ENCODE measurements at regions of chr11 and their contacts with region 1.

Region 1: GRCh38 chr11:69642913-69643632 is 2.1 kb downstream of the CCND1 start:
- DNase-seq: peak; percentile 65 to 81 (median 70)
- H3K4me3 ChIP-seq: peak overlapping the region; percentile 43
- H3K4me3 Mint-ChIP-seq: peak overlapping the region; percentile 74 to 88 (median 80)
- H3K27ac ChIP-seq: no peak overlapping the region
- H3K27ac Mint-ChIP-seq: no peak overlapping the region
- H3K4me1 ChIP-seq: peaks cover 30% of the 10 kb centered on the region
- H3K4me1 Mint-ChIP-seq: peaks cover 20 to 32% (median 24%) of the 10 kb centered on the region in 3 donors
- H3K27me3 ChIP-seq: peaks cover 22% of the 10 kb centered on the region
- H3K27me3 Mint-ChIP-seq: peaks cover 24 to 26% of the 10 kb centered on the region in 2 donors

Region 2: GRCh38 chr11:69101115-69101791 is 541.8 kb before region 1 on chr11:
- CTCF ChIA-PET with region 1: interaction called, 28 read pairs
- POLR2A ChIA-PET with region 1: no interaction called
- DNase-seq: peak; percentile 53 to 76 (median 59)
- H3K4me3 ChIP-seq: no peak overlapping the region
- H3K4me3 Mint-ChIP-seq: no peak overlapping the region
- H3K27ac ChIP-seq: no peak overlapping the region
- H3K27ac Mint-ChIP-seq: no peak overlapping the region
- H3K4me1 ChIP-seq: no peaks in the 10 kb centered on the region
- H3K4me1 Mint-ChIP-seq: no peaks in the 10 kb centered on the region
- H3K27me3 ChIP-seq: no peaks in the 10 kb centered on the region
- H3K27me3 Mint-ChIP-seq: peaks cover 3 to 17% of the 10 kb centered on the region in 2 donors

Region 3: DNA sequence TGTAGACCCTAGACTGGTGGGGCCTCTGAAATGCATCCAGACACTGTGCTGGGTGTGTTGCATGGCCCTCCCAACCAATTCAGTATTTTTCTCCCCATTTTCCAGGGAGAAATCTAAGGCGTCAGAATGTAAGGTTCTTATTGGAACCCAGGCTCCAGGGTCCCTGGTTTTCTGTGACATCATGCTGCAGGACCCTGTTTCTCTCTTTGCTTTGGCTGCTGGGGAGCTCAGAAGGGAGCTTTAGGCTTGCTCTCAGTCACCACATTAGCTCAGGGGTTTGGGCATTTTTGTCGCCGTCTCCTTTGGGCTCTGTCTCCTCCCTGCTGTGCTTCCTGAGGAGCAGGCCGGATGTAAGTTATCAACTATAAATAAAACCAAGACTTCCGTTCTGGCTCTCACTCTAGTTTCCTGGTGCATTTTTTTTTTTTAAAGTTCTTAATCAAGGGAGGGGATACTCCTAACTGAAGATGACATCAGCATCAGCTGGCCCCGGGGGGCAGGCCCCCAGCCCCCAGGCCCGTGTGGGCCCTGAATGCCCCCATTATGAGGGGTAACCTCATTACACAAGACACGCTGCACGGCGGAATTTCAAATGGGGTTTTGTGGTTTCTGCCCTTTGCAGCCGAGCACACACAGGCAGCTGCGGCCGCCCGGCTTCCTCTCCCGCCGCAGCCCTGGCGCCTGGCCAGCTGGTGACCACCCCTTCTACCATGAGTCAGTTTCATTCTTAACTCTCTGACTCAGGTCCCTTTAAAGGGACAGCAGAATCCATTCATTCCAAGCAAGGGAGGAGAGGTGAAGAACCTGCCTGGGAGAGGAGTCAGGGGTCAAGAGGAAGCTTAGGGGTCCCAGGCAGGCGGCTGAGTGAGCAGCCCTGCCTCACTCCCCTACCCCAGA is 345.9 kb before region 1 on chr11:
- CTCF ChIA-PET with region 1: interaction called, 13 read pairs
- POLR2A ChIA-PET with region 1: no interaction called
- DNase-seq: peak; percentile 69 to 90 (median 74)
- H3K4me3 ChIP-seq: peak overlapping the region; percentile 52
- H3K4me3 Mint-ChIP-seq: peak overlapping the region; percentile 58 to 81 (median 78)
- H3K27ac ChIP-seq: peak overlapping the region; percentile 66
- H3K27ac Mint-ChIP-seq: peak overlapping the region in 7 of 8 donors; percentile 76 to 98 (median 94)
- H3K4me1 ChIP-seq: peaks cover 58% of the 10 kb centered on the region
- H3K4me1 Mint-ChIP-seq: peaks cover 46 to 74% (median 53%) of the 10 kb centered on the region in 3 donors
- H3K27me3 ChIP-seq: no peaks in the 10 kb centered on the region
- H3K27me3 Mint-ChIP-seq: no peaks in the 10 kb centered on the region

Measured in CD8-positive, alpha-beta memory T cell (primary cell).